ENCODE measurements at regions of chr3 and their contacts with region 1.

Region 1: GRCh38 chr3:150850191-150850590 is 55.0 kb downstream of the MINDY4B start:
- DNase-seq: no peak
- H3K4me3 ChIP-seq: no peak overlapping the region
- H3K27ac ChIP-seq: no peak overlapping the region
- H3K4me1 ChIP-seq: no peaks in the 10 kb centered on the region
- H3K27me3 ChIP-seq: no peaks in the 10 kb centered on the region
- CTCF ChIP-seq: no peak
- POLR2A ChIP-seq: no peak

Region 2: GRCh38 chr3:150775091-150775501 is 75.1 kb before region 1 on chr3:
- intact Hi-C with region 1: loop called in 1 of 2 experiments (anchors 5 kb)
- DNase-seq: no peak
- H3K4me3 ChIP-seq: no peak overlapping the region
- H3K27ac ChIP-seq: no peak overlapping the region
- H3K4me1 ChIP-seq: peaks cover 11% of the 10 kb centered on the region in 2 donors
- H3K27me3 ChIP-seq: no peaks in the 10 kb centered on the region
- CTCF ChIP-seq: no peak
- POLR2A ChIP-seq: no peak